Uterus (tissue), 4 donors: ENCODE measurements at regions of chr4 and their contacts with region 1.

Region 1: GRCh38 chr4:17468371-17469221 is 43.3 kb downstream of the QDPR start:
- DNase-seq: peak in 1 of 2 donors; percentile 47
- H3K4me3 ChIP-seq: no peak overlapping the region
- H3K27ac ChIP-seq: no peak overlapping the region
- H3K4me1 ChIP-seq: no peaks in the 10 kb centered on the region
- H3K27me3 ChIP-seq: no peaks in the 10 kb centered on the region
- CTCF ChIP-seq: peak in 3 of 4 experiments; percentile 31 to 66 (median 61)
- POLR2A ChIP-seq: no peak

Region 2: DNA sequence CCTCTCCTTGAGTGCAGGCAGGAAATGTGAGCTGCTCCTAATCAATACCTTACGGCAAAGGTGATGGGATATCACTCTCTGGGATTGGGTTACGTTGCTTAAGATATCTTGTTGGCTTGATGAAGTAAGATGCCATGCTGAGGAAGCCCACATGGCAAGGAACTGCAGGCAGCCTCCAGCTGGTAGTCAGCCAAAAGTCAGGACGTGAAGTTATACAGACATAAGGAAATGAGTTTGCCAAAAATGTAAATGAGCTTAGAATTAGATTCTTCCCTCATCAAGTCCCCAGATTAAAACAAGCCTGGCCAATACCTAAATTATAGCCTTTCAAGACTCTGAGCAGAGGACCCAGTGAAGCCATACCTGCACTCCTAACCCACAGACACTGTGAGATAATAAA is 111.7 kb before region 1 on chr4:
- intact Hi-C with region 1: loop called (anchors 10 kb)
- DNase-seq: no peak
- H3K4me3 ChIP-seq: no peak overlapping the region
- H3K27ac ChIP-seq: no peak overlapping the region
- H3K4me1 ChIP-seq: no peaks in the 10 kb centered on the region
- H3K27me3 ChIP-seq: no peaks in the 10 kb centered on the region
- CTCF ChIP-seq: no peak
- POLR2A ChIP-seq: no peak

Region 3: GRCh38 chr4:17630228-17630627 is 161.6 kb after region 1 on chr4:
- intact Hi-C with region 1: no loop called
- DNase-seq: no peak
- H3K4me3 ChIP-seq: no peak overlapping the region
- H3K27ac ChIP-seq: no peak overlapping the region
- H3K4me1 ChIP-seq: no peaks in the 10 kb centered on the region
- H3K27me3 ChIP-seq: no peaks in the 10 kb centered on the region
- CTCF ChIP-seq: no peak
- POLR2A ChIP-seq: no peak